OCI-LY7 (cell line): ENCODE measurements at regions of chr16 and their contacts with region 1.

Region 1: GRCh38 chr16:1610276-1611017 is 1.4 kb downstream of the IFT140 start:
- DNase-seq: peak; percentile 94
- H3K4me3 ChIP-seq: peak overlapping the region; percentile 77
- H3K27ac ChIP-seq: peak overlapping the region; percentile 79
- H3K4me1 ChIP-seq: peaks cover 33% of the 10 kb centered on the region
- CTCF ChIP-seq: no peak

Region 2: GRCh38 chr16:1308977-1309885 is 301.2 kb before region 1 on chr16 and contains the start of gene UBE2I:
- CTCF ChIA-PET with region 1: no interaction called
- POLR2A ChIA-PET with region 1: no interaction called
- intact Hi-C with region 1: loop called (anchors 10 kb)
- DNase-seq: peak; percentile 98
- H3K4me3 ChIP-seq: peak within 1 kb of the TSS; percentile 99
- H3K27ac ChIP-seq: peak within 1 kb of the TSS; percentile 86
- H3K4me1 ChIP-seq: peaks cover 24% of the 10 kb centered on the region
- CTCF ChIP-seq: no peak
- total RNA-seq, gene UBE2I: 122 and 126 TPM in 2 replicates

Region 3: GRCh38 chr16:1492923-1493745 is 117.3 kb before region 1 on chr16 and contains the start of gene TELO2:
- CTCF ChIA-PET with region 1: no interaction called
- POLR2A ChIA-PET with region 1: no interaction called
- intact Hi-C with region 1: loop called (anchors 5 kb)
- DNase-seq: peak; percentile 87
- H3K4me3 ChIP-seq: peak within 1 kb of the TSS; percentile 90
- H3K27ac ChIP-seq: peak within 1 kb of the TSS; percentile 59
- H3K4me1 ChIP-seq: peaks cover 16% of the 10 kb centered on the region
- CTCF ChIP-seq: no peak
- total RNA-seq, gene TELO2: 43.5 and 58.2 TPM in 2 replicates

Region 4: DNA sequence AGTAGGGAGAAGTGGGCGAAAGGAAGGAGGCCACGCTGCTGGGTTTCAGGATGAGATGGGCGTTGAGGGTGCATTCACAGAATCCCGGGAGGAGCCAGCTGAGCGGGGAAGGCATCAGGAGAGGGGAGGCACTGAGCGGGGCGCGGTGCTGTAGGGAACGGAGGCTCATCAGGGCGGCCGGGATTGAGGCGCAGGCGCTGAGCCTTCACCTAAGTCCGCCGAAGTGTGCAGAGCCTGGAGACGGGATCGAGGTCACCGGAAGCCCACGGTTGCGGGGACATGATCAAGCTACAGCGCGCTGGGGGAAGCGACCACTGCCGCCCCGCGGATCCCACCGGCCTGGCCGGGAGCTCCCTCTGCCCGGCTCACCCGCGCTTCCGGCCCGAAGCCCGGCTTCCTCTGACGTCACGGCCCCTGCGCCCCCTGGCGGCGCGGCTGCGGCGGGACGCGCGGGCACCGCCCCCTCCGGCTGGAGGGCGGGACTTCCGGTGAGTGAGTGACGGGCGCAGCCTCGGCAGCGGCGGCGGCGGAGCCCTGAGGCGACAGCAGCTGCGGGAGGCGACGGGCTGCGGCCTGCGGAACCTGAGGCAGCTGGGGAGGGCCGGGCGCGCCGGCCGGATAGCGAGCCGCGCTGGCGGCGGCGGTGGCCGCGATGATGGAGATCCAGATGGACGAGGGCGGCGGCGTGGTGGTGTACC is 95.4 kb after region 1 on chr16 and contains the start of gene MAPK8IP3:
- CTCF ChIA-PET with region 1: no interaction called
- POLR2A ChIA-PET with region 1: interaction called, 6 read pairs
- intact Hi-C with region 1: loop called (anchors 2 kb)
- DNase-seq: peak; percentile 92
- H3K4me3 ChIP-seq: peak within 1 kb of the TSS; percentile 83
- H3K27ac ChIP-seq: peak within 1 kb of the TSS; percentile 57
- H3K4me1 ChIP-seq: peaks cover 30% of the 10 kb centered on the region
- CTCF ChIP-seq: peak; percentile 81
- total RNA-seq, gene MAPK8IP3: 95.9 and 114 TPM in 2 replicates